Activated CD4-positive, alpha-beta memory T cell treated with anti-CD3 and anti-CD28 coated beads for 36 hours (primary cell): ENCODE measurements at regions of chr10 and their contacts with region 1.

Region 1: GRCh38 chr10:5813287-5814109 is at the start of gene GDI2:
- DNase-seq: peak; percentile 98
- H3K4me3 Mint-ChIP-seq: peak within 1 kb of the TSS; percentile 82
- H3K27ac Mint-ChIP-seq: peak within 1 kb of the TSS; percentile 95
- H3K4me1 Mint-ChIP-seq: peaks cover 60% of the 10 kb centered on the region
- H3K27me3 Mint-ChIP-seq: no peaks in the 10 kb centered on the region
- total RNA-seq, gene GDI2: 283 to 286 TPM

Region 2: GRCh38 chr10:5293691-5294550 is 519.6 kb before region 1 on chr10:
- CTCF ChIA-PET with region 1: no interaction called
- POLR2A ChIA-PET with region 1: no interaction called
- intact Hi-C with region 1: loop called (anchors 10 kb)
- DNase-seq: peak; percentile 91
- H3K4me3 Mint-ChIP-seq: peak overlapping the region; percentile 86
- H3K27ac Mint-ChIP-seq: peak overlapping the region; percentile 95
- H3K4me1 Mint-ChIP-seq: peaks cover 79% of the 10 kb centered on the region
- H3K27me3 Mint-ChIP-seq: no peaks in the 10 kb centered on the region

Region 3: DNA sequence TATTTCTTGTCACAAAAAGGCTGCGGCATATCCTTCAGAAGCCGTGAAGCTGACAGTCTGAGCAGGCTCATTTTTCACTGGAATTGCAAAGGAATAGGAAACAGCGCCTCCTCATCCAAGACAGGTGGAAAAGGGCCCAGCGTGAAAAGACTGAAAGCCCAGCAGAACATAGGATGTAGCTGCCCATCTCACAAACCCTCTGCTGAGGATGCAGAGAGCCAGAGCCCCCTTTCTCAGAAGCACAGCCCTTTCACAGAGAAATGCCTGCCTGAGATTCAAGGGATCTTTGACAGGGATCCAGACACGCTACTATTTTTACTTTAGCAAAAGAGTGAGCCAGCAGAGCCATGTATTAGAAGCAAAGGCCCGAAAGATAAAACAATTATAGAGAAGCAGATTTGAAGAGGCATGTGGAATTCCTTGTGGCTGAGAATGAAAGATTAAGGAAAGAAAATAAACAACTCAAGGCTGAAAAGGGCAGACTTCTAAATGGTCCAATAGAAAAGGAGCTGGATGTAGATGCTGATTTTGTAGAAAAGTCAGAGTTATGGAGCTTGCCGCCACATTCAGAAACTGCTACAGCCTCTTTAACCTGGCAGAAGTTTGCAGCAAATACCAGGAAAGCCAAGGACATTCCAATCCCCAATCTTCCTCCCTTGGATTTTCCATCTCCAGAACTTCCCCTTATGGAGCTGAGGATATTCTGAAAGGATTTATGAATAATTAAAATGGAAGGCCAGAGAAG is 37.2 kb before region 1 on chr10:
- CTCF ChIA-PET with region 1: no interaction called
- POLR2A ChIA-PET with region 1: interaction called, 3 read pairs
- intact Hi-C with region 1: loop called (anchors 5 kb)
- DNase-seq: no peak
- H3K4me3 Mint-ChIP-seq: no peak overlapping the region
- H3K27ac Mint-ChIP-seq: peak overlapping the region; percentile 85
- H3K4me1 Mint-ChIP-seq: peaks cover 56% of the 10 kb centered on the region
- H3K27me3 Mint-ChIP-seq: no peaks in the 10 kb centered on the region

Region 4: DNA sequence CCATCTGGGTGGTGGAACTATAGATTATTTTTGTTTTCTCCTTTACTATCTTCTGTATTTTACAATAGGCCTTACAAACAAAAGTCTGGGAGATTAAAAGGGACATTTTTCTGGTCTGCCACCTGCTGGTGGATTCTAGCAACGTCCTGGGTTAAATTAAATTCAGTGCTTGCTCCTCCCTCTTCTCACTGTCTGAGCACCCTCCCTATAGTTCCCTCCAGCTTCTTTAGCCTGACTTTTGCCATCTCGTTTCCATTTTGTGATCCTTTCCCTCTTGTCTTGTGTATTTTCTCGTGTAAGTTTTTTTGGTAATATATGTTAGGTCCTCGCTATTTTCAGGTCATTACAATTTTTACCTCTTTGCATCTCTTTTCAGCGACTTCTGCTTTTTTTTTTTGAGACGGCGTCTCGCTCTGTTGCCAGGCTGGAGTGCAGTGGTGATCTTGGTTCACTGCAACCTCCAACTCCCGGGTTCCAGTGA is 60.1 kb after region 1 on chr10:
- CTCF ChIA-PET with region 1: interaction called, 15 read pairs
- POLR2A ChIA-PET with region 1: interaction called, 6 read pairs
- intact Hi-C with region 1: loop called (anchors 1 kb)
- DNase-seq: peak; percentile 81
- H3K4me3 Mint-ChIP-seq: no peak overlapping the region
- H3K27ac Mint-ChIP-seq: no peak overlapping the region
- H3K4me1 Mint-ChIP-seq: peaks cover 2% of the 10 kb centered on the region
- H3K27me3 Mint-ChIP-seq: no peaks in the 10 kb centered on the region

Region 5: GRCh38 chr10:5932345-5932744 is 118.8 kb after region 1 on chr10:
- CTCF ChIA-PET with region 1: no interaction called
- POLR2A ChIA-PET with region 1: no interaction called
- intact Hi-C with region 1: no loop called
- DNase-seq: no peak
- H3K4me3 Mint-ChIP-seq: no peak overlapping the region
- H3K27ac Mint-ChIP-seq: no peak overlapping the region
- H3K4me1 Mint-ChIP-seq: no peaks in the 10 kb centered on the region
- H3K27me3 Mint-ChIP-seq: no peaks in the 10 kb centered on the region

Region 6: GRCh38 chr10:6068422-6068821 is 254.9 kb after region 1 on chr10:
- CTCF ChIA-PET with region 1: no interaction called
- POLR2A ChIA-PET with region 1: no interaction called
- intact Hi-C with region 1: loop called (anchors 5 kb)
- DNase-seq: peak; percentile 66
- H3K4me3 Mint-ChIP-seq: peak overlapping the region; percentile 71
- H3K27ac Mint-ChIP-seq: peak overlapping the region; percentile 96
- H3K4me1 Mint-ChIP-seq: peaks cover 92% of the 10 kb centered on the region
- H3K27me3 Mint-ChIP-seq: peaks cover 2% of the 10 kb centered on the region